ENCODE measurements at regions of chr3 and their contacts with region 1.

Region 1: DNA sequence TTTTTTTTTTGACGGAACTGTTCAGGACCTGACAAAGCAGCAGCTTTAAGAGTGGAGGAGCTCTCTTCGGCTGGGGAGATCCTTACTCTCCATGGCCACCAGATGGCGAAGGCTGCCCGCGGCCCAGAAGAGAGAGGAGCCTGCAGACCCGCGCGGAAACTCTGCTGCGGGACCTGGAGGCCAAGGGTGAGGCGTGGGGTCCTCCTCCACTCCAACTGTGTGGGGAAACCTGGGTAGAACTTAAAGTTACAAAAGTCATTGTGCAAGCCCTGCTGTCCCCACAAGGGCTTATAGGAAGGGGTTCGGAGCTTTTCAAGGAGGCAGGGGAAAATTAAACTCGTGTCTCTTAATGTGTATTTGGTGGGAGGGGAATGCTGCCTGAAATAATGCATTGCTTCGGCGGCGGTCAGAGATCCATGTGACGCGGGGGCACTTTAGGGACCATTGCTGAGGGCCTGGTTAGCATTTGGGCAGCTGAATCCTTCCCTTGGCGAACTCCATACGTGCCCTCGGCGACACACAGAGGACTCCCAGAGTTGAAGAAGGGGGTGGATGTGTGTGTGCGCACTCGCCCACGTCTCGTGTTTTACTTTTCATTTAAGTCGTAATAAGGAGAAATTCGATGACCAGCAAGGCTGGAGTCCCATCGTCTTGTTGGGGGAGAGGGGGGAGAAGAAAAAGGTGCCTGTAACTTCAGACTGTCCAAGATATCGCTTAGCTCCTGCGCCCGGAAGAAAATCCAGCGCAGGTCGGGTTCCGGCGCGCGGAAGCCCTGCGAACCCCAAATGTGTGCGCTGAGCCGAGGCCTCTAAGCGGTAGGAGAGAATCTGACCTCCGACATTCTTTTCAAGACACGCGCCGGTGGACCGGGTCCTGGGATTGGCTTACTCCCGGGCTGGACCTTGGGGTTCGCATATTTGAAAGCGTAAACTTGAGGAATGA is 9.7 kb downstream of the EOMES start:
- DNase-seq: peak; percentile 86
- ATAC-seq: peak; percentile 91
- H3K4me3 Mint-ChIP-seq: peak overlapping the region; percentile 91
- H3K27ac Mint-ChIP-seq: peak overlapping the region; percentile 92
- H3K4me1 Mint-ChIP-seq: peaks cover 18% of the 10 kb centered on the region
- H3K27me3 Mint-ChIP-seq: peaks cover 25% of the 10 kb centered on the region
- CTCF ChIP-seq: peak; percentile 80

Region 2: DNA sequence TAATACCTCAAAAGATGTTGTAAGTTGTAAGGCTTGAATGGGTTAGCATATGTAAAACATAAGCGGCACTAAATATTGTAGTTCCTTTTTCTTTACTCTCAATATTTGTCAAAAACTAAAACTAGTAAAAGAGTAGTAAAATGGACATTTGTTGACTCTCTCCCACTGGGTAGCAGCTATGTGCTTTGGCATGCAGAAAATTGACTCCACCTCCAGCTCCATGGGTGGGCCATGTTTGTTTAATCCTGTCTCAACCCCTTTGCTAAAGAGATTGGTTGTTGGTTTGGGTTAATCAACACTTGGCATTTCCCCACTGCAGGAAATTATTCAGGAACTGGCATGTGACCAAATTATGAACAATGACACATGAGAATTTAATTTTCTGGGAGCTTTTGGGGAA is 105.0 kb before region 1 on chr3:
- CTCF ChIA-PET with region 1: no interaction called
- POLR2A ChIA-PET with region 1: no interaction called
- intact Hi-C with region 1: no loop called
- DNase-seq: no peak
- ATAC-seq: no peak
- H3K4me3 Mint-ChIP-seq: no peak overlapping the region
- H3K27ac Mint-ChIP-seq: no peak overlapping the region
- H3K4me1 Mint-ChIP-seq: no peaks in the 10 kb centered on the region
- H3K27me3 Mint-ChIP-seq: no peaks in the 10 kb centered on the region
- CTCF ChIP-seq: no peak

Region 3: DNA sequence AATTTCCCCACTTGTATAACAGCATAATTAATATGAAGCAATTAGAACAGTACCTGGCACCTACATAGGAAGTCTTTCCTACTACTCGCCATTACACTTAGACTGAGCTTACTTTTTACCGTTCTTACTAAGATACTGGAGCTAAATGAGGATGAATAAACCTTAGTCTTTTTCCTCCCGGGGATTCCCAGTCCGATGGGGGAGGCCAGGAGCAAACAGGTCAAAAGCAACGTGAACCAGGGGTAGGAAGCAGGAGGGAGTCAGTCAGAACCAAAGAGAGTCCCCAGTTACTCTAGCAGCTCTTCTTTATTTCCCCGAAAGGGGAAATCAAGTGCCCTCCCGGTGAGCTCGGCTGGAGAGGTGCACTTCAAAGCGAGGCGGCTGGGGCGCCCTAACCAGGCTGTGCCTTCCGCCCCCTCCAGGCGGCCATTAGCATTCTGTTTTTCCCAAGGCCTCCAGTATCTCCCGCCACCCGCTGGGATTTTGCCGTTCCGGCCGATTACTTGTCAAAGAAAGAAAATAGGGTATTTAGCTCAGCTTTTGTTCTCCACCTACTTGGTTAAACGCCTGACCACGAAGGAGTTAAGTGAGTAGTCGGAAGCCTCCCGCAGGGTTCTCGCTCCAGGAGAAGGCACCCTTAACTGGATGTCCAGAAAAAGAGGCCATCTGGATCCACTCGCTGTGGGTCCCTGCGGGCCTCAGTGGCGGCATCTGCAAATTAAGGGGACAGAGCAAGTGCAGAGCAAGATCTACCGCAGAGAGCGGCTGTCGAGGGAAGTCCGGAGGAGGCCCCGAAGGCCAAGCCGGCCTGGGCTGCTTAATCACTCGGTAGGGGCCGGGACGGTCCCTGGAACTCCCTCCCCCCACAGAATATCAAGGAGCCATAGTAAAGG is 16.0 kb after region 1 on chr3:
- CTCF ChIA-PET with region 1: interaction called, 53 read pairs
- POLR2A ChIA-PET with region 1: interaction called, 3 read pairs
- intact Hi-C with region 1: no loop called
- DNase-seq: peak; percentile 52
- ATAC-seq: peak; percentile 60
- H3K4me3 Mint-ChIP-seq: peak overlapping the region; percentile 63
- H3K27ac Mint-ChIP-seq: no peak overlapping the region
- H3K4me1 Mint-ChIP-seq: peaks cover 46% of the 10 kb centered on the region
- H3K27me3 Mint-ChIP-seq: peaks cover 75% of the 10 kb centered on the region
- CTCF ChIP-seq: no peak

Region 4: DNA sequence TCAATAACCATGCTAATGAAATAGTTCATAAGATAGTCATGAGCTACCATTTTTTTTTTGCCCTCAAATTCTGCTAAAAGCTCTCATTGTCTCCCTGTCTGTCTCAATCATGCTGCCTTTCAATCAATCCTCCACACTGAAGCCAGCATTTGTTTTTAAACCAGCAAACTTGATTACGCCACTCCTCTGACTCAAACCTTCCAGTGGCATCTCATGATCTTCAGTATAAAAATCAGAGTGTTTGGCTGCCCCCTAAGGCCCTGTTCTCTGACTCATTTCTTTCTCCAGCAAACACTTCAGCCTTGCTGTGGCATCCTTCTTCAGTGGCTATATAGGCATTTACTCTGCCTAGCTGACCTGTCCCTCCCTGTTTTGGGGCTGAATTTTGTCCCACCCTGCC is 45.7 kb after region 1 on chr3:
- CTCF ChIA-PET with region 1: interaction called, 10 read pairs
- POLR2A ChIA-PET with region 1: no interaction called
- intact Hi-C with region 1: no loop called
- DNase-seq: peak; percentile 73
- ATAC-seq: peak; percentile 94
- H3K4me3 Mint-ChIP-seq: no peak overlapping the region
- H3K27ac Mint-ChIP-seq: no peak overlapping the region
- H3K4me1 Mint-ChIP-seq: peaks cover 11% of the 10 kb centered on the region
- H3K27me3 Mint-ChIP-seq: no peaks in the 10 kb centered on the region
- CTCF ChIP-seq: no peak

Region 5: GRCh38 chr3:28286595-28286994 is 574.2 kb after region 1 on chr3:
- CTCF ChIA-PET with region 1: interaction called, 7 read pairs
- POLR2A ChIA-PET with region 1: no interaction called
- intact Hi-C with region 1: loop called (anchors 2 kb)
- DNase-seq: no peak
- ATAC-seq: peak; percentile 75
- H3K4me3 Mint-ChIP-seq: no peak overlapping the region
- H3K27ac Mint-ChIP-seq: no peak overlapping the region
- H3K4me1 Mint-ChIP-seq: peaks cover 29% of the 10 kb centered on the region
- H3K27me3 Mint-ChIP-seq: no peaks in the 10 kb centered on the region
- CTCF ChIP-seq: peak; percentile 60

Region 6: GRCh38 chr3:28317438-28318022 is 605.1 kb after region 1 on chr3:
- CTCF ChIA-PET with region 1: interaction called, 99 read pairs
- POLR2A ChIA-PET with region 1: no interaction called
- intact Hi-C with region 1: no loop called
- DNase-seq: peak; percentile 40
- ATAC-seq: peak; percentile 96
- H3K4me3 Mint-ChIP-seq: no peak overlapping the region
- H3K27ac Mint-ChIP-seq: no peak overlapping the region
- H3K4me1 Mint-ChIP-seq: peaks cover 21% of the 10 kb centered on the region
- H3K27me3 Mint-ChIP-seq: no peaks in the 10 kb centered on the region
- CTCF ChIP-seq: peak; percentile 69

Region 7: GRCh38 chr3:28328188-28329151 is 616.1 kb after region 1 on chr3:
- CTCF ChIA-PET with region 1: interaction called, 99 read pairs
- POLR2A ChIA-PET with region 1: interaction called, 7 read pairs
- intact Hi-C with region 1: loop called (anchors 1 kb)
- DNase-seq: no peak
- ATAC-seq: peak; percentile 22
- H3K4me3 Mint-ChIP-seq: no peak overlapping the region
- H3K27ac Mint-ChIP-seq: peak overlapping the region; percentile 34
- H3K4me1 Mint-ChIP-seq: peaks cover 26% of the 10 kb centered on the region
- H3K27me3 Mint-ChIP-seq: no peaks in the 10 kb centered on the region
- CTCF ChIP-seq: peak; percentile 84

Region 8: GRCh38 chr3:28334552-28334951 is 622.1 kb after region 1 on chr3:
- CTCF ChIA-PET with region 1: interaction called, 99 read pairs
- POLR2A ChIA-PET with region 1: interaction called, 4 read pairs
- intact Hi-C with region 1: no loop called
- DNase-seq: no peak
- ATAC-seq: no peak
- H3K4me3 Mint-ChIP-seq: no peak overlapping the region
- H3K27ac Mint-ChIP-seq: no peak overlapping the region
- H3K4me1 Mint-ChIP-seq: peaks cover 10% of the 10 kb centered on the region
- H3K27me3 Mint-ChIP-seq: no peaks in the 10 kb centered on the region
- CTCF ChIP-seq: peak; percentile 13